ENCODE measurements at regions of chrX and their contacts with region 1.

Region 1: GRCh38 chrX:97446298-97446882 is 562.7 kb downstream of the RPA4 start:
- DNase-seq: no peak
- ATAC-seq: no peak
- H3K4me3 ChIP-seq: no peak overlapping the region
- H3K27ac ChIP-seq: no peak overlapping the region
- H3K4me1 ChIP-seq: no peaks in the 10 kb centered on the region
- H3K27me3 ChIP-seq: no peaks in the 10 kb centered on the region
- CTCF ChIP-seq: no peak
- EP300 ChIP-seq: no peak
- POLR2A ChIP-seq: no peak
- RAD21 ChIP-seq: no peak

Region 2: GRCh38 chrX:97471071-97471470 is 24.7 kb after region 1 on chrX:
- CTCF ChIA-PET with region 1: no interaction called
- POLR2A ChIA-PET with region 1: no interaction called
- in situ Hi-C with region 1: no loop called
- intact Hi-C with region 1: no loop called
- DNase-seq: no peak
- ATAC-seq: no peak
- H3K4me3 ChIP-seq: no peak overlapping the region
- H3K27ac ChIP-seq: no peak overlapping the region
- H3K4me1 ChIP-seq: no peaks in the 10 kb centered on the region
- H3K27me3 ChIP-seq: no peaks in the 10 kb centered on the region
- CTCF ChIP-seq: no peak
- EP300 ChIP-seq: no peak
- POLR2A ChIP-seq: no peak
- RAD21 ChIP-seq: no peak

Region 3: GRCh38 chrX:97685753-97686152 is 239.4 kb after region 1 on chrX:
- CTCF ChIA-PET with region 1: no interaction called
- POLR2A ChIA-PET with region 1: no interaction called
- in situ Hi-C with region 1: no loop called
- intact Hi-C with region 1: loop called (anchors 10 kb)
- DNase-seq: peak; percentile 11
- ATAC-seq: peak; percentile 48; the same call in 1 of the 3 replicates
- H3K4me3 ChIP-seq: no peak overlapping the region
- H3K27ac ChIP-seq: no peak overlapping the region
- H3K4me1 ChIP-seq: no peaks in the 10 kb centered on the region
- H3K27me3 ChIP-seq: no peaks in the 10 kb centered on the region
- CTCF ChIP-seq: peak; percentile 49
- EP300 ChIP-seq: no peak
- POLR2A ChIP-seq: no peak
- RAD21 ChIP-seq: no peak

Measured in HepG2 (cell line).